CD14-positive monocyte (primary cell): ENCODE measurements at regions of chr10 and their contacts with region 1.

Region 1: GRCh38 chr10:28381903-28382347 is 79.1 kb upstream of the MPP7 start:
- DNase-seq: peak; percentile 87 to 90 (median 90)
- H3K4me3 ChIP-seq: peak overlapping the region in 1 of 3 experiments; percentile 46
- H3K4me3 Mint-ChIP-seq: peak overlapping the region in 1 of 2 donors; percentile 55
- H3K27ac ChIP-seq: peak overlapping the region in 1 of 2 donors; percentile 84
- H3K27ac Mint-ChIP-seq: peak overlapping the region; percentile 85 to 96 (median 91)
- H3K4me1 ChIP-seq: peaks cover 43 to 44% of the 10 kb centered on the region in 2 donors
- H3K4me1 Mint-ChIP-seq: peaks cover 47% of the 10 kb centered on the region
- H3K27me3 ChIP-seq: no peaks in the 10 kb centered on the region
- H3K27me3 Mint-ChIP-seq: peaks cover 2 to 3% (median 2%) of the 10 kb centered on the region in 3 donors
- CTCF ChIP-seq: peak; percentile 97

Region 2: DNA sequence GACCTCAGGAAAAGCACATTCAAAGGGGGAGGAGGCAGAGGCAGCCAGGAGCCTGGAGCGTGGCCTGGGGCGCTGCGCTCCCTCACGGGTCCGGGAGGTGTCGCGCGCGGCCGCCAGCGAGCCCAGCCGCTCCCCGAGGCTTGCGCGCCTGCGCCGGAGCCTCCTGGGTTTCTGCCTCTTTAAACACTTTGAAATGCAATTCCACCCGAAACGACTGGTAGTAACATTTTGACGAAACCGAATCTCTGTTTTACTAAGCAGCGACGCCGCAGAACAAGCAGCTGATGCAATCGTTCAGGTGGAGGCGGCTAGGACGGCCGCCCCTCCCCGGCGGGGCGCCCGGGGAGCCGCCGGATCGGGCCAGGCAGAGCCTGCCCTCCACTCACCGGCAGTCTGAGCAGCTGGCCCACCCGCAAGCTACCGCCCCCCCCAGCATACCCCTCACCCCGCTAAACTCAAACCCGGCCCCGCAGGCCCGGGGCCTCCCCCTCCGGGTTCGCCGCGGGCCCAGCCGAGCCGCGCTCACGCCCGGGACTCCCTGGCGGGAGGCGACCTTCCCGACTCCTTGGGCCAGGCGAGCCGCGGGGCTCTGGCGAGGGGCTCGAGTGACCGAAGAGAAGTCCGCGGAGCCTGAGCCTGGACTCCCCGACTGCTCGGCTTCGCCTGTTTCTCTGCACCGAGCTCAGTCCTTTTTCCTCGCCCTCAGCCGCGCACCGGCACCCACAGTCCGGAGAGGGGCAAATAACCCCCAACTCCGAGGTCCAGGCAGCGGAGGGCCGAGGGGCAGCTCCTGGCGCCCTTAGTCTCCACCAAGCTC is 639.5 kb before region 1 on chr10:
- intact Hi-C with region 1: loop called in 1 of 2 experiments (anchors 10 kb)
- DNase-seq: peak; percentile 44 to 58 (median 47)
- H3K4me3 ChIP-seq: peak overlapping the region; percentile 51 to 87 (median 65)
- H3K4me3 Mint-ChIP-seq: peak overlapping the region; percentile 93 to 96
- H3K27ac ChIP-seq: no peak overlapping the region
- H3K27ac Mint-ChIP-seq: no peak overlapping the region
- H3K4me1 ChIP-seq: peaks cover 53 to 58% of the 10 kb centered on the region in 2 donors
- H3K4me1 Mint-ChIP-seq: peaks cover 50% of the 10 kb centered on the region
- H3K27me3 ChIP-seq: peaks cover 69 to 90% of the 10 kb centered on the region in 2 donors
- H3K27me3 Mint-ChIP-seq: peaks cover 63 to 83% (median 69%) of the 10 kb centered on the region in 3 donors
- CTCF ChIP-seq: peak; percentile 86

Region 3: DNA sequence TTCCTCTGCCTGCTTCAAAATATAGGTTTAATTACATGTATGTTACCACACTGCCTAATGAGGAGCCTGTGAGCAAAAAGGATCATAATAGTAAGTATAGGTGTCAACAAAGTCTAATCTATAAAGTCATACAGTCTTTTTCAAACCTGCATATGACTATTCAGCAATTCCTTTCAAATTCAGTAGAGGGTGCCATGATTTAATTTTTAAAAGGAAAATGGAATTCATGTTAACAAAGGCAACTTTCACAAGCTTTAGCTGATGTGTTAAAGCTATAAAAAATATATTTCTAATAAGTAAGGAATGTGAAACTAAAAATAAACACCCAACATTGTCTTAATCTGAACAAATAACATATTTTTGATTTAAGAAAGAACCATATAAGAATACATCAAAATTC is 131.1 kb before region 1 on chr10:
- intact Hi-C with region 1: loop called (anchors 5 kb)
- DNase-seq: peak in 1 of 3 donors; percentile 18
- H3K4me3 ChIP-seq: no peak overlapping the region
- H3K4me3 Mint-ChIP-seq: no peak overlapping the region
- H3K27ac ChIP-seq: no peak overlapping the region
- H3K27ac Mint-ChIP-seq: peak overlapping the region in 1 of 7 donors; percentile 25
- H3K4me1 ChIP-seq: peaks cover 46 to 63% of the 10 kb centered on the region in 2 donors
- H3K4me1 Mint-ChIP-seq: peaks cover 71% of the 10 kb centered on the region
- H3K27me3 ChIP-seq: no peaks in the 10 kb centered on the region
- H3K27me3 Mint-ChIP-seq: peaks cover 0 to 4% (median 0%) of the 10 kb centered on the region in 3 donors
- CTCF ChIP-seq: peak; percentile 65

Region 4: GRCh38 chr10:28302638-28303488 is 79.1 kb before region 1 on chr10 and contains the start of gene MPP7:
- intact Hi-C with region 1: loop called (anchors 2 to 5 kb)
- DNase-seq: peak; percentile 97 to 98 (median 98)
- H3K4me3 ChIP-seq: peak within 1 kb of the TSS; percentile 73 to 95 (median 94)
- H3K4me3 Mint-ChIP-seq: peak within 1 kb of the TSS; percentile 90 to 97
- H3K27ac ChIP-seq: peak within 1 kb of the TSS; percentile 64 to 84
- H3K27ac Mint-ChIP-seq: peak within 1 kb of the TSS; percentile 84 to 96 (median 92)
- H3K4me1 ChIP-seq: peaks cover 62 to 66% of the 10 kb centered on the region in 2 donors
- H3K4me1 Mint-ChIP-seq: peaks cover 82% of the 10 kb centered on the region
- H3K27me3 ChIP-seq: no peaks in the 10 kb centered on the region
- H3K27me3 Mint-ChIP-seq: peaks cover 0 to 2% (median 0%) of the 10 kb centered on the region in 3 donors
- CTCF ChIP-seq: peak; percentile 78
- polyA plus RNA-seq, gene MPP7: 17.3 to 48.3 (median 33.6) TPM

Region 5: GRCh38 chr10:28367929-28368484 is 13.9 kb before region 1 on chr10:
- intact Hi-C with region 1: loop called in 1 of 2 experiments (anchors 2 kb)
- DNase-seq: peak; percentile 86 to 95 (median 90)
- H3K4me3 ChIP-seq: peak overlapping the region in 1 of 3 experiments; percentile 53
- H3K4me3 Mint-ChIP-seq: peak overlapping the region in 1 of 2 donors; percentile 42
- H3K27ac ChIP-seq: peak overlapping the region; percentile 83 to 95
- H3K27ac Mint-ChIP-seq: peak overlapping the region; percentile 90 to 96 (median 95)
- H3K4me1 ChIP-seq: peaks cover 56 to 63% of the 10 kb centered on the region in 2 donors
- H3K4me1 Mint-ChIP-seq: peaks cover 58% of the 10 kb centered on the region
- H3K27me3 ChIP-seq: no peaks in the 10 kb centered on the region
- H3K27me3 Mint-ChIP-seq: peaks cover 0 to 2% (median 0%) of the 10 kb centered on the region in 3 donors
- CTCF ChIP-seq: no peak